Left ventricle myocardium superior (tissue), 1 donor: ENCODE measurements at regions of chr13 and their contacts with region 1.

Region 1: GRCh38 chr13:37602747-37603381 is 4.3 kb upstream of the POSTN start:
- DNase-seq: no peak
- ATAC-seq: peak; percentile 39

Region 2: GRCh38 chr13:37109051-37109678 is 493.7 kb before region 1 on chr13:
- intact Hi-C with region 1: loop called (anchors 1 kb)
- DNase-seq: no peak
- ATAC-seq: peak; percentile 63